ENCODE measurements at regions of chr13 and their contacts with region 1.

Region 1: DNA sequence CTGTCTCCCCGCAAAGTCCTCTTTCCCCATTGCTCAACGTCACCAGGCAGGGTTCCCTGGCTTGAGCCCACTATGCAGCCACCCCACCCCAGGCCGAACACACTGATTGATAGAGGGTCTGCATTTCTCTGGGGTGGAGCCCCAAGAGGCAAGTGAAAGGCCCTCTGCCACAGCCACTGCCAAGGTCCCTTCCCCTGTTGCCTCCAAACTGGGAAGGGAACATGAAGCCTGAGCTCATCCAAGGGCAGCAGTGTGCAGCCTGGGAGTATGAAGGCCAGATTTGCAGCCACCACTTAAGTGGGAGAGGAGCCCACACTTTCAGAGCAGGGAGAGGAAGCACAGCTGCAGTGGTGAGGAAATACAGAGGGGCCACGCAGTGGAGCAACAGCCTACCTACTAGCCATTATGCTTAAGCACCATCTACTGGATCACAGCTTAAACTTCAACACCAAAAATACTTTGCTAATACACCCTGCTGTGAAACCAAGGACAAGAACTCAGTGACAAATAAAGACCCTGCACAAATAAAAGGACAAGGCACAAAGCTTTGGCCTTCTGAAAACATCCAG is 48.6 kb downstream of the UBL3 start:
- DNase-seq: no peak
- ATAC-seq: no peak
- H3K4me3 ChIP-seq: no peak overlapping the region
- H3K4me3 Mint-ChIP-seq: no peak overlapping the region
- H3K27ac ChIP-seq: no peak overlapping the region
- H3K27ac Mint-ChIP-seq: no peak overlapping the region
- H3K4me1 ChIP-seq: peaks cover 0 to 4% of the 10 kb centered on the region in 2 donors
- H3K4me1 Mint-ChIP-seq: peaks cover 2 to 46% (median 34%) of the 10 kb centered on the region in 7 donors
- H3K27me3 ChIP-seq: no peaks in the 10 kb centered on the region
- H3K27me3 Mint-ChIP-seq: no peaks in the 10 kb centered on the region

Region 2: GRCh38 chr13:29782798-29783197 is 19.0 kb before region 1 on chr13:
- CTCF ChIA-PET with region 1: no interaction called
- POLR2A ChIA-PET with region 1: no interaction called
- intact Hi-C with region 1: loop called in 1 of 2 experiments (anchors 2 kb)
- DNase-seq: no peak
- ATAC-seq: no peak
- H3K4me3 ChIP-seq: no peak overlapping the region
- H3K4me3 Mint-ChIP-seq: no peak overlapping the region
- H3K27ac ChIP-seq: no peak overlapping the region
- H3K27ac Mint-ChIP-seq: no peak overlapping the region
- H3K4me1 ChIP-seq: no peaks in the 10 kb centered on the region
- H3K4me1 Mint-ChIP-seq: peaks cover 5 to 56% (median 36%) of the 10 kb centered on the region in 7 donors
- H3K27me3 ChIP-seq: no peaks in the 10 kb centered on the region
- H3K27me3 Mint-ChIP-seq: no peaks in the 10 kb centered on the region

Region 3: GRCh38 chr13:29819143-29819542 is 17.3 kb after region 1 on chr13:
- CTCF ChIA-PET with region 1: no interaction called
- POLR2A ChIA-PET with region 1: no interaction called
- intact Hi-C with region 1: loop called in 1 of 2 experiments (anchors 2 kb)
- DNase-seq: no peak
- ATAC-seq: no peak
- H3K4me3 ChIP-seq: no peak overlapping the region
- H3K4me3 Mint-ChIP-seq: peak overlapping the region in 2 of 10 donors; percentile 17 to 62
- H3K27ac ChIP-seq: no peak overlapping the region
- H3K27ac Mint-ChIP-seq: peak overlapping the region in 1 of 9 donors; percentile 43
- H3K4me1 ChIP-seq: peaks cover 0 to 12% of the 10 kb centered on the region in 2 donors
- H3K4me1 Mint-ChIP-seq: peaks cover 15 to 76% (median 59%) of the 10 kb centered on the region in 7 donors
- H3K27me3 ChIP-seq: no peaks in the 10 kb centered on the region
- H3K27me3 Mint-ChIP-seq: no peaks in the 10 kb centered on the region

Region 4: GRCh38 chr13:30017880-30018279 is 216.1 kb after region 1 on chr13:
- CTCF ChIA-PET with region 1: no interaction called
- POLR2A ChIA-PET with region 1: no interaction called
- intact Hi-C with region 1: no loop called
- DNase-seq: no peak
- ATAC-seq: no peak
- H3K4me3 ChIP-seq: no peak overlapping the region
- H3K4me3 Mint-ChIP-seq: no peak overlapping the region
- H3K27ac ChIP-seq: no peak overlapping the region
- H3K27ac Mint-ChIP-seq: no peak overlapping the region
- H3K4me1 ChIP-seq: no peaks in the 10 kb centered on the region
- H3K4me1 Mint-ChIP-seq: peaks cover 0 to 13% (median 6%) of the 10 kb centered on the region in 7 donors
- H3K27me3 ChIP-seq: no peaks in the 10 kb centered on the region
- H3K27me3 Mint-ChIP-seq: peaks cover 0 to 21% (median 0%) of the 10 kb centered on the region in 5 donors